CD8-positive, alpha-beta memory T cell (primary cell): ENCODE measurements at regions of chr17 and their contacts with region 1.

Region 1: DNA sequence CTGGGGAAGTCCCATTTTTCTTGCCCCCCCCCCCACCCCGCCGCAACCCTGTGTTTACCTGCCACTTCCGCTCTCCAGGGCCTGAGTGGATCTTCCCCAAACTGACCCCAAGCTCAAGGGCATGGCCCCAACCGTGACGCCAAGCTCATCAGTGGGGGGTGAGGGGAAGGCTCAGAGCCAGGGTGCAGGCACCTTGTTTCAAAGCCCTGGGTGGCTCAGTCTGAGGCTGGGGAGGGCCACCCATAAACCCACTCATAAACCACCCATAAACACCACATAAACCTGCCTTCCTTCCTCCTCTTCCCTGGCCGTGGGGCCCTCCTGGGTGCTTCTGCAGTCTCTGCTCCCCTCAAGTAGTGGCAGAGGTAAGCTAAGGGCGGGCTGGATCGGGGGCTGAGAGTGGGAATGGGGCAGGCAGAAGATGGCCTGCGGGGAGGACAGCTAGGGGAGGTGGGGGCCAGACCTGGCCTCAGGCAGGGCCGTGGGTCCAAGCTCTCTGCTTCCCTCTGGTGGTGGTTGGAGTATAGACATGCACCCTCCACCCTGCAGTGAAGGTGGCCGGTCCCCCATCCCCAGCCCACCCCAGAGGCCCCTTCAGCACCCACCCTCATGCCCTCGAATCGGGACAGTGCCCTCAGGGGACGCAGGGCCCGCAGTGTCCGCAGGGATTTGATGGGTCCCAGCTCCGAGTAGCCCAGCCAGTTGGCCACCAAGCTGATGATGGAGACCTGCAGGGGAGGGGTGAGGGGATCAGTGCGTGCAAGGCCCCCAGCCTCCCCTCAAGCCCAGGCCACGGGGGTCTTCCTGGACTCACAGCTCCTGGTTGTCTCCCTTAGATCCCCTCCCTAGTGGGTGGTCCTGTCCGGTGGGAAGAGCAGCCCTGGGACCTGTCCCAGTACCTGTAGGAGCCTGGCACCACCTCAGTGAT is 14.6 kb upstream of the CD79B start:
- DNase-seq: peak; percentile 25 to 67 (median 63)
- H3K4me3 ChIP-seq: peak overlapping the region; percentile 39
- H3K4me3 Mint-ChIP-seq: peak overlapping the region; percentile 31 to 87 (median 83)
- H3K27ac ChIP-seq: no peak overlapping the region
- H3K27ac Mint-ChIP-seq: peak overlapping the region in 6 of 8 donors; percentile 32 to 75 (median 62)
- H3K4me1 ChIP-seq: peaks cover 23% of the 10 kb centered on the region
- H3K4me1 Mint-ChIP-seq: peaks cover 15 to 31% (median 22%) of the 10 kb centered on the region in 3 donors
- H3K27me3 ChIP-seq: no peaks in the 10 kb centered on the region
- H3K27me3 Mint-ChIP-seq: no peaks in the 10 kb centered on the region

Region 2: GRCh38 chr17:63911657-63912426 is 34.9 kb before region 1 on chr17:
- CTCF ChIA-PET with region 1: interaction called, 11 read pairs
- POLR2A ChIA-PET with region 1: no interaction called
- DNase-seq: peak; percentile 51 to 75 (median 58)
- H3K4me3 ChIP-seq: no peak overlapping the region
- H3K4me3 Mint-ChIP-seq: no peak overlapping the region
- H3K27ac ChIP-seq: no peak overlapping the region
- H3K27ac Mint-ChIP-seq: peak overlapping the region in 2 of 8 donors; percentile 17 to 47
- H3K4me1 ChIP-seq: no peaks in the 10 kb centered on the region
- H3K4me1 Mint-ChIP-seq: peaks cover 0 to 2% (median 0%) of the 10 kb centered on the region in 3 donors
- H3K27me3 ChIP-seq: no peaks in the 10 kb centered on the region
- H3K27me3 Mint-ChIP-seq: peaks cover 0 to 1% of the 10 kb centered on the region in 2 donors

Region 3: DNA sequence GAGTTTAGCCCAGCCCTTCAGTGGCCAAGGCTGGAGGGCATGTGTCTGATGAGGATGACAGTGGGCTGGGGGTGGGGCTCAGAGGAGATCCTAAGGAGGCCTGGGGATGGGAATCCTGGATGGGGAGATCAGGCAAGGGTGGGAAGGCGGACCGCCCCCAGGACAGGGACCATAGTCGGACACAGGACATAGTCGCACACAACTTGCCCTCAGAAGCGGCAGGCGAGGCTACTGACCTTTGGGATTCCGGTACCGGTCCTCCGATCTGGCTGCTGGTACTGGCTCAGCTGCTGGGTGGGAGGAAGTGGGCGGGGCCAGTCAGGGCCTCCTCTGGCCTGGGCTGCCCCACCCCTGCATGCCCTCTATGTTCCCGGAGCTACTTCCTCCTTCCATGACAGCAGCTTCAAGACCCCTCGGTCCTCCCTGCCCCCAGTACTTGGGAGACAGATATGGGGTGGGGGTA is 15.6 kb before region 1 on chr17:
- CTCF ChIA-PET with region 1: interaction called, 12 read pairs
- POLR2A ChIA-PET with region 1: interaction called, 7 read pairs
- DNase-seq: peak; percentile 40 to 74 (median 60)
- H3K4me3 ChIP-seq: peak overlapping the region; percentile 68
- H3K4me3 Mint-ChIP-seq: peak overlapping the region; percentile 75 to 93 (median 90)
- H3K27ac ChIP-seq: peak overlapping the region; percentile 27
- H3K27ac Mint-ChIP-seq: peak overlapping the region; percentile 81 to 96 (median 91)
- H3K4me1 ChIP-seq: peaks cover 24% of the 10 kb centered on the region
- H3K4me1 Mint-ChIP-seq: peaks cover 20 to 30% (median 23%) of the 10 kb centered on the region in 3 donors
- H3K27me3 ChIP-seq: no peaks in the 10 kb centered on the region
- H3K27me3 Mint-ChIP-seq: no peaks in the 10 kb centered on the region

Region 4: DNA sequence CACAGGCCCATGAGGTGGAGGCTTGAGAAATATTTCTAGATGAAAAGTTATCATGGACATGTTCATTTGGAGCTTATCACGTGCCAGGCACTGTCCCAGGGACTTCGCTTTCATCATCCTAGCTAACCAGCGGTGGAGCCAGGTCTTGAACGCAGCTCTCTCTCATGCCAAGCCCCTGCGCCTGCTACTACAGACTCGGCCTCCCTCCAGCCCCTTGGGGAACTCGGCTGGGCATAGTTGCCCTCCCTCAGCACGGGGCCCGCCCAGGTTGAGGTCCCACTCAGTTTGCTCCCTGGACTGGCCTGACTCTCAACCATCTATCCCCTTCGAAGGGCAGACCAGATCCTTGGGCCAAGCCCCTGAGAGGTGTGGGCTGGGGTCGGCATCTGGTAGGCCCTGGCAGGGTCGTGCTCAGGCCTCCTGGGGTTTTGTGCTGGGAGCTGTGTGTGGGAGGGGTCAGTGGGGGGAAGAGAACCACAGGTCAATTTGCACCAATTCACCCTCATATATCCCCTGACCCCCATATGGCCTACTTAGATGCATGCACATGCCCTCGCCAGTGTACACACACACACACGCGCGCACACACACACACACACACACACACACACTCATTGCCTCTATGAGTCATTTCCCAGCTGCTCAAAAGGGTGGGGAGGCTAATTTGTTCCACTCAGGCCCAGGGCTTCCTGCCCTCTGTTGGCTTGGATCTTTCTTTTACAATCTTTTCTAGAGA is 38.1 kb after region 1 on chr17:
- CTCF ChIA-PET with region 1: interaction called, 11 read pairs
- POLR2A ChIA-PET with region 1: no interaction called
- DNase-seq: peak in 4 of 5 donors; percentile 51 to 64 (median 59)
- H3K4me3 ChIP-seq: no peak overlapping the region
- H3K4me3 Mint-ChIP-seq: peak overlapping the region in 6 of 7 donors; percentile 3 to 61 (median 30)
- H3K27ac ChIP-seq: no peak overlapping the region
- H3K27ac Mint-ChIP-seq: peak overlapping the region; percentile 61 to 78 (median 75)
- H3K4me1 ChIP-seq: peaks cover 11% of the 10 kb centered on the region
- H3K4me1 Mint-ChIP-seq: peaks cover 20 to 26% (median 24%) of the 10 kb centered on the region in 3 donors
- H3K27me3 ChIP-seq: no peaks in the 10 kb centered on the region
- H3K27me3 Mint-ChIP-seq: no peaks in the 10 kb centered on the region

Region 5: GRCh38 chr17:64020056-64020766 is 73.5 kb after region 1 on chr17 and contains the start of gene ICAM2:
- CTCF ChIA-PET with region 1: interaction called, 48 read pairs
- POLR2A ChIA-PET with region 1: interaction called, 14 read pairs
- DNase-seq: peak; percentile 90 to 98 (median 96)
- H3K4me3 ChIP-seq: peak within 1 kb of the TSS; percentile 83
- H3K4me3 Mint-ChIP-seq: peak within 1 kb of the TSS; percentile 96 to 100 (median 98)
- H3K27ac ChIP-seq: peak within 1 kb of the TSS; percentile 90
- H3K27ac Mint-ChIP-seq: peak within 1 kb of the TSS; percentile 99 to 100 (median 100)
- H3K4me1 ChIP-seq: peaks cover 82% of the 10 kb centered on the region
- H3K4me1 Mint-ChIP-seq: peaks cover 68 to 90% (median 72%) of the 10 kb centered on the region in 3 donors
- H3K27me3 ChIP-seq: no peaks in the 10 kb centered on the region
- H3K27me3 Mint-ChIP-seq: peaks cover 0 to 5% of the 10 kb centered on the region in 2 donors
- total RNA-seq, gene ICAM2: 77.4 to 80.7 TPM

Region 6: GRCh38 chr17:64036198-64036922 is 89.7 kb after region 1 on chr17:
- CTCF ChIA-PET with region 1: no interaction called
- POLR2A ChIA-PET with region 1: no interaction called
- DNase-seq: no peak
- H3K4me3 ChIP-seq: no peak overlapping the region
- H3K4me3 Mint-ChIP-seq: no peak overlapping the region
- H3K27ac ChIP-seq: no peak overlapping the region
- H3K27ac Mint-ChIP-seq: peak overlapping the region in 5 of 8 donors; percentile 26 to 95 (median 48)
- H3K4me1 ChIP-seq: no peaks in the 10 kb centered on the region
- H3K4me1 Mint-ChIP-seq: peaks cover 0 to 12% (median 8%) of the 10 kb centered on the region in 3 donors
- H3K27me3 ChIP-seq: no peaks in the 10 kb centered on the region
- H3K27me3 Mint-ChIP-seq: no peaks in the 10 kb centered on the region